Activated T-helper 2 cell treated with anti-CD3 and anti-CD28 coated beads, Interferon-gamma antibody, Interleukin-2, Interleukin-4, amounts not matched to agents 10 μg/mL and 5 μg/mL and 100 μg/mL, durations not matched to agents 14 hours and 24 hours and 36 hours (primary cell): ENCODE measurements at regions of chr11 and their contacts with region 1.

Region 1: DNA sequence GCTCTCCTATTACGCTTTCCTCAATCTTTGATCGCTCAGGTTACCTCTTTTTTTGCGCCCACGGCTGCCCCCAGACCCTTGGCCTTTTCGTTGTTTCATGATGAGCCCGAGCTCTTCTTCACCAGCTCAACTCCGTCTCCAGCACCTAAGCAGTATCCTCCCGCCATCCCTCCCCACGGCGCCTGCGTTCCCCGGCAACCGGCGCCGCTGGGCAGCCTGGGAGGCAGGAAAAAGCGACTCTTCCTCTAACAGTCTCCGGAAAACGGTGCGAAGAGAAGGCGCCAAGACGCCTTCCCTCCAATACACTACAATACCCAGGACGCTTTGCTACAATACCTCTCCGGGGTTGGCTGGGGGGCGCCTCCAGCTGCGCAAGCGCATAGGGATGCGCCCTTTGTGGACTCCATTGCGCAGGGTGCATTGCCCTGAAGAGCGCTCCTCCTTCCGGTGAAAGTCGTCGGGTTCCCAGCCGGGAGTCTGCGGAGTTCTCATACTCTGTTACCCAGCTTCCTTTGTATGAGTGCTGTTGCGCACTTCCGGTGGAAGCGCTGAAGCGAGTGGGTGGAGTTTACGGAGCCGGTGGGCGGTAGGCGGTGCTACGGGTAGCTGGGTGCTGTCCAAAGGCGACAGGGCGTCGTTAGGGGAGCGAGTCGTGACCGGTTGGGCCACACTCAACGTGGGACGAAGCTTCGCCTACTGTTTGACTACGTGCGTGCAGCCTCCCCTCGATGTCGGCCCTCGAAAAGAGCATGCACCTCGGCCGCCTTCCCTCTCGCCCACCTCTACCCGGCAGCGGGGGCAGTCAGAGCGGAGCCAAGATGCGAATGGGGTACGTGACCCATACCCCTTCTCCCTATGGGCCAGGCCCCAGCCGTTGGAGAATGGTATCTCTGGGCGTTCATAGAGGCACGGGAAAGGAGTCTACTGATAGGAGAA is at the starts of genes C2CD3 and PPME1:
- DNase-seq: peak; percentile 99
- H3K4me3 Mint-ChIP-seq: no peak within 1 kb of the TSS
- H3K27ac Mint-ChIP-seq: no peak within 1 kb of the TSS
- H3K4me1 Mint-ChIP-seq: peaks cover 13% of the 10 kb centered on the region
- H3K27me3 Mint-ChIP-seq: no peaks in the 10 kb centered on the region
- total RNA-seq, gene C2CD3: 32.5 and 33.1 TPM in 2 replicates
- total RNA-seq, gene PPME1: 67.1 and 67.5 TPM in 2 replicates

Region 2: GRCh38 chr11:73760679-73761402 is 410.1 kb before region 1 on chr11 and contains the start of gene RAB6A:
- intact Hi-C with region 1: no loop called
- DNase-seq: peak; percentile 100
- H3K4me3 Mint-ChIP-seq: peak within 1 kb of the TSS; percentile 93
- H3K27ac Mint-ChIP-seq: peak within 1 kb of the TSS; percentile 95
- H3K4me1 Mint-ChIP-seq: peaks cover 26% of the 10 kb centered on the region
- H3K27me3 Mint-ChIP-seq: peaks cover 5% of the 10 kb centered on the region
- total RNA-seq, gene RAB6A: 74.6 and 89.5 TPM in 2 replicates

Region 3: GRCh38 chr11:73787643-73788537 is 383.1 kb before region 1 on chr11 and contains the start of gene MRPL48:
- intact Hi-C with region 1: loop called (anchors 5 kb)
- DNase-seq: peak; percentile 87
- H3K4me3 Mint-ChIP-seq: peak within 1 kb of the TSS; percentile 98
- H3K27ac Mint-ChIP-seq: peak within 1 kb of the TSS; percentile 98
- H3K4me1 Mint-ChIP-seq: peaks cover 17% of the 10 kb centered on the region
- H3K27me3 Mint-ChIP-seq: no peaks in the 10 kb centered on the region
- total RNA-seq, gene MRPL48: 63.1 and 67.1 TPM in 2 replicates

Region 4: GRCh38 chr11:73965076-73965860 is 205.7 kb before region 1 on chr11:
- intact Hi-C with region 1: loop called (anchors 1 kb)
- DNase-seq: no peak
- H3K4me3 Mint-ChIP-seq: peak overlapping the region; percentile 57
- H3K27ac Mint-ChIP-seq: no peak overlapping the region
- H3K4me1 Mint-ChIP-seq: peaks cover 28% of the 10 kb centered on the region
- H3K27me3 Mint-ChIP-seq: no peaks in the 10 kb centered on the region

Region 5: GRCh38 chr11:74018331-74019005 is 152.5 kb before region 1 on chr11:
- intact Hi-C with region 1: loop called (anchors 2 kb)
- DNase-seq: no peak
- H3K4me3 Mint-ChIP-seq: no peak overlapping the region
- H3K27ac Mint-ChIP-seq: no peak overlapping the region
- H3K4me1 Mint-ChIP-seq: peaks cover 44% of the 10 kb centered on the region
- H3K27me3 Mint-ChIP-seq: no peaks in the 10 kb centered on the region

Region 6: DNA sequence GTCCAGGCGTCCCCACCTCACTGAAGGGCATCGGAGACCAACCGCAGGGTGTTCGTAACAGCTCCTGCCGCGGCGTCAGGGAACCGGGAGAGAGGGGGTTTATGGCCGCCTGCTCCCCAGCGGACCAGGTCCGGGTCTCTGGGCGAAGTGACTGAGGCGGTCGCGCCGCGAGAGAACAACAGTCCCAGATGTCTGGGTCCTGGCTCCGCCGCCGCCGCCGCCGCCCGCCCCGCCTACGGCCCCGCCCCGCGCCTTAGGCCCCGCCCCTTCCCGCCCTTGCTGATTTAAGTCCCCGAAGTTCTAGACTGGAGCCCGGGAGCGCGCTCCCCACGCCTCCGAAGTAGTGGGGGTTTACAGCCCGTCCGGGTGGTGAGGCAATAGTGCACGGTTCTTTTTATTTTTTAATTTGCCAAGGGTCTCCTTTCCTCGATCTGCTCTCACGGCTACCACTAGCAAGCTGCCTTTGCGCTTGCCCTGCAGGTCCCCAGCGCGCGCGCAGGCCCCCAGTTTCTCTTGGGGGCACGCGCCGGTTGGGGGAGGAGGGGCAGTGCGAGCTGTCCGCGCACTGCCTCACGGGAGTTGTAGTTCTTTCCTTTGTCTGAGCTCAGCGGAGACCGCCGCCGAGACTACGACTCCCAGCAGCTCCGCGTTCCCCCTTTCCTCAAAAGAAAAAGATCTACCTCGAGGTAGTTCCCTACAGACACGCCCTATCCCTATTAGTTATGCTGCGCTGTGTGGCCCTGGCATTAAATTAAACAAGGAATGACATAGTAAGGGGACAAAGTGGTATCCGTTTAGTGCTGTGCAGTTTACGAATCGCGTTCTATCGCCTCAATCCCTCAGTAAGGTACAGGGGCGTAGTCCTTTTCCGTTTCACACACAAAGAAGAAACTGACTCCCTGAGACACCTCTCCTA is 227.5 kb after region 1 on chr11 and contains the start of gene PGM2L1:
- intact Hi-C with region 1: loop called (anchors 2 kb)
- DNase-seq: peak; percentile 89
- H3K4me3 Mint-ChIP-seq: peak within 1 kb of the TSS; percentile 99
- H3K27ac Mint-ChIP-seq: peak within 1 kb of the TSS; percentile 100
- H3K4me1 Mint-ChIP-seq: peaks cover 30% of the 10 kb centered on the region
- H3K27me3 Mint-ChIP-seq: no peaks in the 10 kb centered on the region
- total RNA-seq, gene PGM2L1: 17.1 and 18.2 TPM in 2 replicates